ENCODE measurements at regions of chr7 and their contacts with region 1.

Region 1: GRCh38 chr7:50621973-50622490 is 56.8 kb upstream of the DDC start:
- DNase-seq: no peak
- H3K4me3 Mint-ChIP-seq: no peak overlapping the region
- H3K27ac Mint-ChIP-seq: no peak overlapping the region
- H3K4me1 Mint-ChIP-seq: no peaks in the 10 kb centered on the region
- H3K27me3 Mint-ChIP-seq: peaks cover 20% of the 10 kb centered on the region

Region 2: GRCh38 chr7:50564640-50565558 is 57.1 kb before region 1 on chr7 and contains the start of gene DDC:
- CTCF ChIA-PET with region 1: no interaction called
- DNase-seq: no peak
- H3K4me3 Mint-ChIP-seq: no peak within 1 kb of the TSS
- H3K27ac Mint-ChIP-seq: no peak within 1 kb of the TSS
- H3K4me1 Mint-ChIP-seq: no peaks in the 10 kb centered on the region
- H3K27me3 Mint-ChIP-seq: peaks cover 32% of the 10 kb centered on the region

Region 3: DNA sequence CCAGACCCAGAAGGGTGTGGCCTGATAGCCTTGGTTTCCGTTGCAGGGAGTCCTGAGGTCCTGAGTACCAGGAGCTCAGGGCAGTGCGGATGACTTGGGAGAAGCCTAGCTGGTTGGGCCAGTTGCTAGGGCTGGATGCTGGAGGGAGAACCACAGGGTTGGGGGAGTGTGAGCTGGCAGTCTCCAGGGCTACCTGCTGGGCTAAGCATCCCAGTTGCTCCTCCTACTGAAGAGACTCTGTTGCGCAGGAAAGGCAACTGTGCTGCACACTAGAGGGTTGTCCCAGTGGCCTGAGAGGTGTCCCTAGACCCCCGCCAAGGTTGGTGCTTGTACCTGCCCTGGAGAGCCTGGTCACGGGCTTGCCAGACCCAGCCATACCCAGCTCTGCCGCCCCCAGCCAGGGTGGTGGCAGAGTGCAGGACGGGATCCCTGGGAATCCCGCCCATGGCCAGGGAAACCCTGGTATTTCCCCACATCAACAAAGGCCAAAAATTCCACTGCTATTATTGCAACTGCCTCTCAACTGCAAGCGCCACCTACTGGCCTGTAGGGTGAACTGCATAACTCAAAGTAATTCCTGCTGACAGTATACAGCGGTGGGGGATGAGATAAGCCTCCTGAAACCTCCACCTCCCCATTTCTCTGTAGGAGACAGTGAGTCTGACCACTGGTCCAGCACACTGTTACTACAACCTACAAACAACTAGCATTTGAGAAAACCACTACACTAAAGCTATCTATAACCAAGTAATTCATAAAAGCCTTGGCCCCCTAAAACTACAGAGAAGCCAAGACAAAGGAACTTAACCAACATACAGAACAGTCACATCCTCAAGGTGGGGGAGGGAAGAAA is 10.8 kb after region 1 on chr7:
- CTCF ChIA-PET with region 1: interaction called, 13 read pairs
- DNase-seq: peak; percentile 64
- H3K4me3 Mint-ChIP-seq: no peak overlapping the region
- H3K27ac Mint-ChIP-seq: no peak overlapping the region
- H3K4me1 Mint-ChIP-seq: no peaks in the 10 kb centered on the region
- H3K27me3 Mint-ChIP-seq: peaks cover 23% of the 10 kb centered on the region

Measured in activated naive CD4-positive, alpha-beta T cell treated with anti-CD3 and anti-CD28 coated beads, Interleukin-2, amount 10 ng/mL, durations not matched to agents 7 days and 5 days (primary cell).